Heart left ventricle (tissue), 16 donors: ENCODE measurements at regions of chr1 and their contacts with region 1.

Region 1: DNA sequence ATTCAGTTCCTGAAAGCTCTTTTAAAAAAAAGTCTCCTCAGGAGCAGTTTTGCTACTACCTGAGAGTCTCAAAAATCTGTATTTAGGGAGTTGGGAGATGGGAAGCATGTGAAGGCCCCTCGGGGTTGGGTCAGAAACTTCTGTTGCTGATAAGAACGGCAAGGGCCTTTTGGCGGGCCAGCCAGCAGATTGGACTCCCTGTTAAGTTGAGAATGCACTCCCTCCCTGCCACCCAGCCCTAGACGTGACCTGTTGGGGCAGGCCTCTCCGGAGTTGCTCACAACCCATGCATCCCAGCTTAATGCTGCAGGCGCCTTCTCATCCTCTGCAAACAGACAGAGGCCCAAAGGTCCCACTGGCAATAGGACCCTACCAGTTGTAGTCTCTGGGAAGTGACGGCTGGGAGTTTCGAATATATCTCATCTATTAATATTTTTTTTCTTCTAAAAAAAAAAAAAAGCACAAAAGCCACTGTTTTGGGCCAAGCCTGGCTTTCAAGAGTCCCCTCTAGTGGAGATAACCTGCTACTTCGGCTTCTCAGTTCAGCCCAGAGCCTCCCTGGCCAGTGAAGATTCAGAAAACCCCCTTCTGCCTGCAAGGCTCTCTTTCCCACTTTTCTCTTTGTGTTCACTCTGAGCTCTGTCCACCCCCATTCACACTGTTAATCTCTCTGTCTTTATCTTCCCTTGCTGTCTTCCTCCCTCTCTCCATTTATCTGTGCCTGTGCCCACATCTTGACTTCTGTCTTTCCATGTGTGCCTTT is 5.3 kb downstream of the PLXNA2 start:
- DNase-seq: peak in 2 of 5 donors; percentile 23 to 44
- ATAC-seq: peak in 3 of 4 donors; percentile 23 to 50 (median 24)
- H3K4me3 ChIP-seq: peak overlapping the region in 8 of 12 donors; percentile 13 to 88 (median 49)
- H3K27ac ChIP-seq: peak overlapping the region in 10 of 12 donors; percentile 24 to 86 (median 46)
- H3K4me1 ChIP-seq: peaks cover 0 to 91% (median 67%) of the 10 kb centered on the region in 12 donors
- H3K27me3 ChIP-seq: peaks cover 0 to 18% (median 0%) of the 10 kb centered on the region in 9 donors
- CTCF ChIP-seq: peak; percentile 65 to 90 (median 78)
- POLR2A ChIP-seq: no peak

Region 2: GRCh38 chr1:208121813-208122364 is 117.0 kb before region 1 on chr1:
- intact Hi-C with region 1: no loop called
- DNase-seq: no peak
- ATAC-seq: no peak
- H3K4me3 ChIP-seq: no peak overlapping the region
- H3K27ac ChIP-seq: no peak overlapping the region
- H3K4me1 ChIP-seq: peaks cover 0 to 31% (median 11%) of the 10 kb centered on the region in 12 donors
- H3K27me3 ChIP-seq: no peaks in the 10 kb centered on the region
- CTCF ChIP-seq: no peak
- POLR2A ChIP-seq: no peak

Region 3: GRCh38 chr1:208132287-208132883 is 106.5 kb before region 1 on chr1:
- intact Hi-C with region 1: loop called in 8 of 10 experiments (anchors 1 to 5 kb)
- DNase-seq: peak; percentile 78 to 89 (median 82)
- ATAC-seq: peak; percentile 82 to 93 (median 90)
- H3K4me3 ChIP-seq: no peak overlapping the region
- H3K27ac ChIP-seq: peak overlapping the region in 1 of 12 donors; percentile 8
- H3K4me1 ChIP-seq: peaks cover 0 to 67% (median 12%) of the 10 kb centered on the region in 12 donors
- H3K27me3 ChIP-seq: no peaks in the 10 kb centered on the region
- CTCF ChIP-seq: peak; percentile 74 to 94 (median 84)
- POLR2A ChIP-seq: no peak

Region 4: DNA sequence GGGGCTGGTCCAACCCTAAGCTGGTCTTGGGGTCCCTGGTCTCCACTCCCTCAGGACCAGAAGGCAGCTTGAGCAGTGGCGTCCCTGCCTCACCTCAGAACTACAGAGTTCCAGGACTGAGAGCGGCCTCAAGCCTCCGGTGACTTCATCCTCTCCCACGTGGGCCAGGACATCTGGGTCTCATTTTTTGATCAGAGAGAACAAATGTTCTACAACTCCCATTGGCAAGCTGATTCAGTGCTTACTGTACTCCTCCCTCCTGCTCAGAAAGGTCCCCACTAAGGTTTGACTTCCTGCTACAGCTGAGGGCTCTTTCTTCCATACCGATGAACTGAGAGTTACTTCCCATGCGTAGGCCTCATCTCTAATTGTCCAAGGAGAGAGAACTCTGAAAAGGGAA is 73.2 kb before region 1 on chr1:
- intact Hi-C with region 1: loop called in 1 of 10 experiments (anchors 5 kb)
- DNase-seq: peak in 2 of 5 donors; percentile 39 to 55
- ATAC-seq: peak in 2 of 4 donors; percentile 8 to 19
- H3K4me3 ChIP-seq: no peak overlapping the region
- H3K27ac ChIP-seq: no peak overlapping the region
- H3K4me1 ChIP-seq: peaks cover 5 to 92% (median 64%) of the 10 kb centered on the region in 12 donors
- H3K27me3 ChIP-seq: no peaks in the 10 kb centered on the region
- CTCF ChIP-seq: no peak
- POLR2A ChIP-seq: no peak

Region 5: GRCh38 chr1:208184088-208184911 is 54.6 kb before region 1 on chr1:
- intact Hi-C with region 1: loop called in 3 of 10 experiments (anchors 10 kb)
- DNase-seq: peak in 2 of 5 donors; percentile 46 to 51
- ATAC-seq: peak; percentile 30 to 93 (median 74)
- H3K4me3 ChIP-seq: no peak overlapping the region
- H3K27ac ChIP-seq: peak overlapping the region in 2 of 12 donors; percentile 19 to 50
- H3K4me1 ChIP-seq: peaks cover 0 to 71% (median 55%) of the 10 kb centered on the region in 12 donors
- H3K27me3 ChIP-seq: no peaks in the 10 kb centered on the region
- CTCF ChIP-seq: no peak
- POLR2A ChIP-seq: no peak

Region 6: GRCh38 chr1:208203127-208203847 is 35.6 kb before region 1 on chr1:
- intact Hi-C with region 1: loop called in 7 of 10 experiments (anchors 5 kb)
- DNase-seq: peak; percentile 61 to 73 (median 64)
- ATAC-seq: peak in 3 of 4 donors; percentile 21 to 48 (median 39)
- H3K4me3 ChIP-seq: peak overlapping the region in 1 of 12 donors; percentile 11
- H3K27ac ChIP-seq: peak overlapping the region; percentile 64 to 86 (median 76)
- H3K4me1 ChIP-seq: peaks cover 17 to 86% (median 71%) of the 10 kb centered on the region in 12 donors
- H3K27me3 ChIP-seq: no peaks in the 10 kb centered on the region
- CTCF ChIP-seq: no peak
- POLR2A ChIP-seq: no peak

Region 7: DNA sequence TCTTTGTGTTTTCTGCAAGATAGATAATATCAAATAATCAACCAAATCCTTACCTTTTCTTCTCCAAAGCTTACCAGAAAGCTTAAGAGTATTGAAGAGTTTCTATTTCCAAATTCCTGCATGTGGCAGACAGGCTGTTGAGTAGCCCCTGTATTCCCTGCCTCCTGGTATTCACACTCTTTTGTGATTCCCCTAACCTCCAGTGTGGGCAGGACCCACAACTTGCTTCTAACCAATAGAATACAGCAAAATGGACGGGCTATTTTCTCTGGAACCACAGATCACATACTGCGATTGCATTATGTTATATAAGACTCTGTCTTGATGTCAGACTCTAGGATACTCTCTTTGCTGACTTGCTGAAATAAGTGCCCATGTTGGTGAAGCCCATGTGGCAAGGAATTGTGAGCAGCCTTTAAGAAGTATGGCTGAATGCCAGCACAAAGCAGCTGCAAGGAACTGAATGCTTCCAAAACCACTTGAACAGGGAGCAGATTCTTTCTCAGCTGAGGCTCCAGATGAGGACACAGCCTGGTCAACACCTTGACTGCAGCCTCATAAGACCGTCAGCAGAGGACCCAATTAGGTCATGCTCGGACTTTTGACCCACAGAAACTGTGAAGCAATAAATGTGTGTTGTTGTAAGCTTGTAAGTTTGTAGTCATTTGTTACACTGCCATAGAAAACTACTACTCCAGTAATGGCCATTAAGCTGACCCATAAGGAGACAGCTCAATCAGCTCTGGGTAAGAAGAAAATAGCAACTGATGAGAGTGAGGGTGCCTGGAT is 53.2 kb after region 1 on chr1:
- intact Hi-C with region 1: no loop called
- DNase-seq: no peak
- ATAC-seq: no peak
- H3K4me3 ChIP-seq: no peak overlapping the region
- H3K27ac ChIP-seq: no peak overlapping the region
- H3K4me1 ChIP-seq: no peaks in the 10 kb centered on the region
- H3K27me3 ChIP-seq: peaks cover 0 to 21% (median 0%) of the 10 kb centered on the region in 9 donors
- CTCF ChIP-seq: no peak
- POLR2A ChIP-seq: no peak